T-cell (primary cell): ENCODE measurements at regions of chr15 and their contacts with region 1.

Region 1: GRCh38 chr15:73540161-73540560 is 93.0 kb downstream of the NPTN start:
- DNase-seq: no peak
- ATAC-seq: no peak
- H3K4me3 ChIP-seq: no peak overlapping the region
- H3K4me3 Mint-ChIP-seq: no peak overlapping the region
- H3K27ac ChIP-seq: no peak overlapping the region
- H3K27ac Mint-ChIP-seq: no peak overlapping the region
- H3K4me1 ChIP-seq: no peaks in the 10 kb centered on the region
- H3K4me1 Mint-ChIP-seq: no peaks in the 10 kb centered on the region
- H3K27me3 ChIP-seq: no peaks in the 10 kb centered on the region
- H3K27me3 Mint-ChIP-seq: peaks cover 0 to 1% of the 10 kb centered on the region in 2 donors

Region 2: GRCh38 chr15:73156431-73157191 is 383.6 kb before region 1 on chr15:
- CTCF ChIA-PET with region 1: no interaction called
- POLR2A ChIA-PET with region 1: interaction called in 1 of 2 experiments, 10 read pairs
- DNase-seq: no peak
- ATAC-seq: no peak
- H3K4me3 ChIP-seq: no peak overlapping the region
- H3K4me3 Mint-ChIP-seq: no peak overlapping the region
- H3K27ac ChIP-seq: no peak overlapping the region
- H3K27ac Mint-ChIP-seq: no peak overlapping the region
- H3K4me1 ChIP-seq: no peaks in the 10 kb centered on the region
- H3K4me1 Mint-ChIP-seq: no peaks in the 10 kb centered on the region
- H3K27me3 ChIP-seq: no peaks in the 10 kb centered on the region
- H3K27me3 Mint-ChIP-seq: no peaks in the 10 kb centered on the region

Region 3: GRCh38 chr15:73388256-73388781 is 151.8 kb before region 1 on chr15:
- CTCF ChIA-PET with region 1: no interaction called
- POLR2A ChIA-PET with region 1: no interaction called
- DNase-seq: no peak
- ATAC-seq: no peak
- H3K4me3 ChIP-seq: no peak overlapping the region
- H3K4me3 Mint-ChIP-seq: no peak overlapping the region
- H3K27ac ChIP-seq: no peak overlapping the region
- H3K27ac Mint-ChIP-seq: no peak overlapping the region
- H3K4me1 ChIP-seq: no peaks in the 10 kb centered on the region
- H3K4me1 Mint-ChIP-seq: peaks cover 0 to 4% (median 0%) of the 10 kb centered on the region in 3 donors
- H3K27me3 ChIP-seq: peaks cover 0 to 29% of the 10 kb centered on the region in 2 experiments
- H3K27me3 Mint-ChIP-seq: peaks cover 25 to 36% of the 10 kb centered on the region in 2 donors

Region 4: DNA sequence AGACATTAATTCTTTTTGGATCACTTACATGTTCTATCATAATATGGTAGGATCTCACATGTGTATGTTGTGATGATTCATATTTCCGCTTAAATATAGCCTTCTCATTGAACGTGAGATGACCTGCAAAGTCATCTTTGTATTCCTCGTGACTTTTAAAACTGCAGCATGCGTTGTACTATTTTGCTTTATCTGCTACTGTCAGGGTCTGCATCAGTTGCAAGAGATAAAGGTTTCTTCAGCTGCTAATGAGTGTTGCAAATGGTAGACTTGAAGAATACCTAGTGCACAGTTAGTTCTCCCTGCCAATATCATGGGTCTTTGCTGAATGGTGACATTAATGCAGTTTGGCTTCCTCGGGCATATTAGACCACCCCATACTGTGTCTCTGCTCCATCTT is 65.4 kb before region 1 on chr15:
- CTCF ChIA-PET with region 1: no interaction called
- POLR2A ChIA-PET with region 1: no interaction called
- DNase-seq: no peak
- ATAC-seq: no peak
- H3K4me3 ChIP-seq: no peak overlapping the region
- H3K4me3 Mint-ChIP-seq: no peak overlapping the region
- H3K27ac ChIP-seq: no peak overlapping the region
- H3K27ac Mint-ChIP-seq: no peak overlapping the region
- H3K4me1 ChIP-seq: no peaks in the 10 kb centered on the region
- H3K4me1 Mint-ChIP-seq: no peaks in the 10 kb centered on the region
- H3K27me3 ChIP-seq: peaks cover 0 to 4% of the 10 kb centered on the region in 2 experiments
- H3K27me3 Mint-ChIP-seq: peaks cover 20 to 41% of the 10 kb centered on the region in 2 donors